CD4-positive, alpha-beta memory T cell (primary cell): ENCODE measurements at regions of chr11 and their contacts with region 1.

Region 1: DNA sequence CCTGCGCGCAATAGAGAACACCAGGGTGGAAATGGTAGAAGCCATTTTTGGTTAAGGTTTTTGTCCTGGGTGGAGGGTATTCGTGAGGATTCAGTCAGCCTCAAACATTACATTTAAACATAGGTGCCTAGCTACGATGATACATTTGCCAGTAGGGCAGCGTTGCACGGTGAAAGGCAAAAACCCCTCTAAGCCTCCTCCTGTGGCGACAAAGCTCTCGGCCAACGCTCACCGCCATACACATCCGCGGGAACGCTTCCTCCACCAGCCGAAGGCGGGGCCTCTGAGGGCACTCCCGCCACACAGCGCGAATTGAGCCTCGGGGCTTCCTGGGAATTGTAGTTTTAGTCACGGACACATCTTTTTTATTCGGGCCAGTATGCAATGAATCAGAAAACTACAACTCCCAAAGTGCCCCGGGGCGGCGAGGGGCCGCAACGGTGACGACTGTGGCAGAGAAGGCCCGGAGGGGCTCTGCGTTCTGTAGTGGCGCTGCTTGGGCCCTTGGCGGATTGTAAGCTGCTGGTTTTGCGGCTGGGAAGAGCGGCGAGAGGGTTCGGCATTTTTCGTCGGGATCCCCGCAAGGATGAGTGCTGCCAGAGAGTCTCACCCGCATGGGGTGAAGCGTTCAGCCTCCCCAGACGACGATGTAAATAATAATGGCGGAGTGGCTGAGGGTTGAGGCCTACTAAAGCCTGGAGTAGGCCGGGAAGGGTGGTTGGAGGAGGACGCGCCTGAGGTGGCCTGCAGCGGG is at the start of gene C11orf58:
- DNase-seq: peak; percentile 97 to 98 (median 98)
- H3K4me3 ChIP-seq: peak within 1 kb of the TSS; percentile 70 to 98
- H3K4me3 Mint-ChIP-seq: peak within 1 kb of the TSS in 5 of 8 donors; percentile 58 to 84 (median 72)
- H3K27ac ChIP-seq: peak within 1 kb of the TSS; percentile 99
- H3K27ac Mint-ChIP-seq: peak within 1 kb of the TSS in 5 of 7 donors; percentile 86 to 94 (median 90)
- H3K4me1 ChIP-seq: peaks cover 41% of the 10 kb centered on the region
- H3K4me1 Mint-ChIP-seq: peaks cover 17 to 32% (median 23%) of the 10 kb centered on the region in 4 donors
- H3K27me3 ChIP-seq: no peaks in the 10 kb centered on the region
- H3K27me3 Mint-ChIP-seq: no peaks in the 10 kb centered on the region
- total RNA-seq, gene C11orf58: 145 to 148 TPM

Region 2: GRCh38 chr11:16605894-16606783 is 132.2 kb before region 1 on chr11:
- CTCF ChIA-PET with region 1: no interaction called
- POLR2A ChIA-PET with region 1: interaction called, 3 read pairs
- intact Hi-C with region 1: loop called (anchors 2 kb)
- DNase-seq: peak; percentile 74 to 83 (median 78)
- H3K4me3 ChIP-seq: peak overlapping the region; percentile 37 to 52
- H3K4me3 Mint-ChIP-seq: peak overlapping the region; percentile 76 to 89 (median 86)
- H3K27ac ChIP-seq: no peak overlapping the region
- H3K27ac Mint-ChIP-seq: peak overlapping the region; percentile 5 to 86 (median 52)
- H3K4me1 ChIP-seq: peaks cover 41% of the 10 kb centered on the region
- H3K4me1 Mint-ChIP-seq: peaks cover 16 to 34% (median 25%) of the 10 kb centered on the region in 4 donors
- H3K27me3 ChIP-seq: peaks cover 74% of the 10 kb centered on the region
- H3K27me3 Mint-ChIP-seq: peaks cover 27 to 52% of the 10 kb centered on the region in 2 donors

Region 3: GRCh38 chr11:16749666-16750065 is 11.3 kb after region 1 on chr11:
- CTCF ChIA-PET with region 1: interaction called, 3 read pairs
- POLR2A ChIA-PET with region 1: interaction called, 25 read pairs
- intact Hi-C with region 1: no loop called
- DNase-seq: no peak
- H3K4me3 ChIP-seq: no peak overlapping the region
- H3K4me3 Mint-ChIP-seq: no peak overlapping the region
- H3K27ac ChIP-seq: no peak overlapping the region
- H3K27ac Mint-ChIP-seq: peak overlapping the region in 3 of 7 donors; percentile 42 to 59 (median 50)
- H3K4me1 ChIP-seq: peaks cover 20% of the 10 kb centered on the region
- H3K4me1 Mint-ChIP-seq: peaks cover 12 to 43% (median 25%) of the 10 kb centered on the region in 4 donors
- H3K27me3 ChIP-seq: no peaks in the 10 kb centered on the region
- H3K27me3 Mint-ChIP-seq: no peaks in the 10 kb centered on the region

Region 4: DNA sequence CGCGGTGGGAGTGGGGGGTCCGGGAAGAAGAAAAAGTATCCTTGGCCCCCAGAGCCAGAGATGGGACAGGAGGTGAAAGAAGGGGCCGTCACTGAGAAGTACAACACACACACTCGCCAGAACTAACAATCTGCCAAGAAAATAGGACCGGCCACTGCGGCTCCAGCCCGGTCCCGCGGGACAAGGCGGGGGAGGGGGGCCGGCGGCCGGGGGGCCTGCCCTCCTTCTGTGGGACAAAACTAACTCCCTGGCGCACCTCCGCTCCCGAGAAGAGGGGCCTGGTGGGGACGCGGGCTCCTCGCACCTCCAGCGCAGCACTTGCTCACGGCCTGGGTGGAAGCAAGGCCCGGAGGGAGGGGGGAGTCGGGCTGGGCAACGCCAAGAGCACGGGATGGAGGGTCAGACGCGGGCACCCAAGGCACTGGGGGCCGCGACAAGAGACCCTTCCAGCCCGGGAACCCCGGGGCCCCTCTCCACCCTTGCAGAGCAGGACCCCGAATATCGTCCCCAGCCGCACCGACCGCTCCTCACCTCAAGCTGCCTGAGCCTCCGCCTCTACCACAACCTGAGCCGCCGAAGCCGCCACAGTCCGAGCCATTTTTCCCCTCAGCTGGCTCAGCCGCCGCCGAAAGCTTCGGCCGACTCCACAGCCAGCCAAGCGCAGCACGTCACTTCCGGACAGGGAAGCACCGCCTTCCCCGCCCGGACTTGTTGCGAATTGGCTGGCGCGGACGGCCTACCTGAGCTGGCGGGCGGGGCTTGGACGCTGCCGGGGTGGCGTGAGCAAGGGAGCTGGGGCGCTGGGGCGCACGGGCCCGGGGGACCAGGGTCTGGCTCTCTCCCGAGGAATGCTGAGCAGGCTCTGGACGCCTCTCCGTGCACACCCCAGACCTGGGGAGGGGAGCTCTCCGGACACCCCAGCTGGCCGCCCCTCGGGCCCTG is 469.2 kb after region 1 on chr11 and contains the start of gene PIK3C2A:
- CTCF ChIA-PET with region 1: no interaction called
- POLR2A ChIA-PET with region 1: interaction called, 6 read pairs
- intact Hi-C with region 1: loop called (anchors 2 kb)
- DNase-seq: peak; percentile 90 to 94 (median 91)
- H3K4me3 ChIP-seq: peak within 1 kb of the TSS; percentile 70 to 79
- H3K4me3 Mint-ChIP-seq: peak within 1 kb of the TSS; percentile 95 to 100 (median 99)
- H3K27ac ChIP-seq: peak within 1 kb of the TSS; percentile 80
- H3K27ac Mint-ChIP-seq: peak within 1 kb of the TSS; percentile 75 to 100 (median 98)
- H3K4me1 ChIP-seq: peaks cover 25% of the 10 kb centered on the region
- H3K4me1 Mint-ChIP-seq: peaks cover 15 to 48% (median 35%) of the 10 kb centered on the region in 4 donors
- H3K27me3 ChIP-seq: no peaks in the 10 kb centered on the region
- H3K27me3 Mint-ChIP-seq: no peaks in the 10 kb centered on the region
- total RNA-seq, gene PIK3C2A: 32.0 to 40.4 TPM